Mammary epithelial cell (primary cell): ENCODE measurements at regions of chr3 and their contacts with region 1.

Region 1: GRCh38 chr3:14532691-14533456 is 7.3 kb downstream of the GRIP2 start:
- DNase-seq: peak; percentile 5
- H3K4me3 ChIP-seq: no peak overlapping the region
- H3K27ac ChIP-seq: no peak overlapping the region
- H3K4me1 ChIP-seq: no peaks in the 10 kb centered on the region
- H3K27me3 ChIP-seq: no peaks in the 10 kb centered on the region
- CTCF ChIP-seq: no peak

Region 2: DNA sequence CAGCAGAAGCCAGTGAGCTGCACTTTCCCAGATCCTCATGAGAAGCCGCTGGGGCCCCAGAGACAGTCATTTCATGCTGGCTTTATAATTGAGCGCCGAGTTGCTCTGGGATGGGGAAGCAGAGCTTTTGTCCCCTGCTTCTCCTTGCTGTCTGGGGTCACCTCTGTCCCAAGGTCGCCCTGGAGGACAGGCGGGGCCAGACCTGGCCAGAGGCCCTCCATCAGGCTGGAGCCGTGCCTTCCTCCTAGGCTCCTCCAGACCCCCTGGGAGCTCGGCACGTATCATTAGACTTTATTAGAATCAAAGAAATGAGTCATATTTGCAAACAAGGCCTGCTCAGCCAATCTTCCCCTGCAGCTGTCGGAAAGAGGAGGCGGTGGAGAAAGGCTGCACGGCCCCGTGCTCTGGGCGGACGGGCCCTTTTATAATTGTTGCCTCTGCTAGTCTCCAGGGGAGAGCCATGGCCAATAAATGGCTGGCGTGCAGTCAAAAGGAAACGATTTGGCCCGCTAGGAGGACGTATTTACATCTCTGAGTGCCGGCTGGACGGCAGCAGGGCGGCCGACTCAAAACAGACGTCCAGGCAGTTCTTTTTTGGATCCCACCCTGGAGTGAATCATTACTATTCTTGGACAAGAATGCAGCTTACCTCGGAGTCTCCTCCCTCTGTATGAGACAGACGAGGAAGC is 80.1 kb before region 1 on chr3:
- CTCF ChIA-PET with region 1: no interaction called
- dilution Hi-C with region 1: no loop called
- in situ Hi-C with region 1: no loop called
- intact Hi-C with region 1: no loop called
- DNase-seq: peak; percentile 81
- H3K4me3 ChIP-seq: no peak overlapping the region
- H3K27ac ChIP-seq: peak overlapping the region; percentile 39
- H3K4me1 ChIP-seq: peaks cover 21% of the 10 kb centered on the region
- H3K27me3 ChIP-seq: no peaks in the 10 kb centered on the region
- CTCF ChIP-seq: peak in 1 of 2 donors; percentile 7

Region 3: GRCh38 chr3:14822670-14823390 is 290.0 kb after region 1 on chr3:
- CTCF ChIA-PET with region 1: no interaction called
- dilution Hi-C with region 1: loop called (anchors 10 kb)
- in situ Hi-C with region 1: no loop called
- intact Hi-C with region 1: no loop called
- DNase-seq: no peak
- H3K4me3 ChIP-seq: no peak overlapping the region
- H3K27ac ChIP-seq: no peak overlapping the region
- H3K4me1 ChIP-seq: no peaks in the 10 kb centered on the region
- H3K27me3 ChIP-seq: no peaks in the 10 kb centered on the region
- CTCF ChIP-seq: no peak